Transverse colon (tissue), 4 donors: ENCODE measurements at regions of chr2 and their contacts with region 1.

Region 1: GRCh38 chr2:30625701-30626100 is 178.7 kb downstream of the LCLAT1 start:
- DNase-seq: no peak
- H3K4me3 ChIP-seq: no peak overlapping the region
- H3K27ac ChIP-seq: no peak overlapping the region
- H3K4me1 ChIP-seq: no peaks in the 10 kb centered on the region
- H3K27me3 ChIP-seq: no peaks in the 10 kb centered on the region
- CTCF ChIP-seq: no peak
- EP300 ChIP-seq: no peak
- POLR2A ChIP-seq: no peak

Region 2: GRCh38 chr2:30686000-30686399 is 60.3 kb after region 1 on chr2:
- in situ Hi-C with region 1: no loop called
- intact Hi-C with region 1: loop called (anchors 2 kb)
- DNase-seq: no peak
- H3K4me3 ChIP-seq: no peak overlapping the region
- H3K27ac ChIP-seq: no peak overlapping the region
- H3K4me1 ChIP-seq: peaks cover 0 to 10% (median 9%) of the 10 kb centered on the region in 4 donors
- H3K27me3 ChIP-seq: no peaks in the 10 kb centered on the region
- CTCF ChIP-seq: no peak
- EP300 ChIP-seq: no peak
- POLR2A ChIP-seq: no peak